ENCODE measurements at regions of chr15 and their contacts with region 1.

Region 1: DNA sequence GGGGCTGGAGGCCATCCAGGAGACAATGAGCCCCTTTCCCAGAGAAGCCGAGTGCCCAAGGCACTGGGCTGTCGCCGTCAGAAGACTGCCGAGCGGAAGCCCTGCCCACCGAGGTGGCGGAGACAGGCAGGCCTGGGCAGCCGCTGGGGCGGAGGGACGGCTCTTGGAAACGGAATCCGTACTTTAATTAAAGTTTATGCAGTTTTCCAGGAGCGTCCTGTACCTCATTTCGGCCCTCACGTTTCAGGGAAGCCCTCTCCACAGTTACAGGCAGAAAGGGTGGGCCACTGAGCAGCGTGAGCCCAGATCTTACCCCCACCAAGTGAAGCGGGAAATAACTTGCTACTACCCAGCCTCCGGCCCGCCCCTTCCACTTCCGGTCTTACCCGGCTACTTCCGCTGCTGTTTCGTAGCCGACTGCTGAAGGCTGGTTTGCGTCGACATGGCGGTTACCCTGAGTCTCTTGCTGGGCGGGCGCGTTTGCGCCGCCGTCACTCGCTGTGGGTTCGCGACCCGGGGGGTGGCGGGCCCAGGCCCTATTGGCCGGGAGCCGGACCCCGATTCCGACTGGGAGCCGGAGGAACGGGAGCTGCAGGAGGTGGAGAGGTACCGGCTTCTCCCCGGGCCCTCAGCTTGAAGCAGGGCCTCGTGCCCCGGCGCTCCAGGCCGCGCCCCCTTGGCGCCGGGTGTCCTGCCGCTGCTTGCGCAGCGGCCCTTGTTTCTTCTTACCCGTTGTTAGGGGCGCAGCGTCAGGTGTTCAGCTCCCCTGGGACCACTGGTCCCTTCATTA is at the start of gene NGRN:
- H3K4me3 Mint-ChIP-seq: peak within 1 kb of the TSS; percentile 94
- H3K27ac Mint-ChIP-seq: peak within 1 kb of the TSS; percentile 97
- H3K4me1 Mint-ChIP-seq: peaks cover 52% of the 10 kb centered on the region
- H3K27me3 Mint-ChIP-seq: no peaks in the 10 kb centered on the region

Region 2: GRCh38 chr15:90233376-90234095 is 31.9 kb before region 1 on chr15 and contains the start of gene CIB1:
- intact Hi-C with region 1: loop called (anchors 2 kb)
- H3K4me3 Mint-ChIP-seq: peak within 1 kb of the TSS; percentile 79
- H3K27ac Mint-ChIP-seq: peak within 1 kb of the TSS; percentile 83
- H3K4me1 Mint-ChIP-seq: peaks cover 53% of the 10 kb centered on the region
- H3K27me3 Mint-ChIP-seq: no peaks in the 10 kb centered on the region

Region 3: GRCh38 chr15:90249203-90249863 is 16.1 kb before region 1 on chr15 and contains the start of gene TTLL13:
- intact Hi-C with region 1: loop called (anchors 2 kb)
- H3K4me3 Mint-ChIP-seq: peak within 1 kb of the TSS; percentile 77
- H3K27ac Mint-ChIP-seq: peak within 1 kb of the TSS; percentile 47
- H3K4me1 Mint-ChIP-seq: peaks cover 20% of the 10 kb centered on the region
- H3K27me3 Mint-ChIP-seq: peaks cover 12% of the 10 kb centered on the region

Region 4: DNA sequence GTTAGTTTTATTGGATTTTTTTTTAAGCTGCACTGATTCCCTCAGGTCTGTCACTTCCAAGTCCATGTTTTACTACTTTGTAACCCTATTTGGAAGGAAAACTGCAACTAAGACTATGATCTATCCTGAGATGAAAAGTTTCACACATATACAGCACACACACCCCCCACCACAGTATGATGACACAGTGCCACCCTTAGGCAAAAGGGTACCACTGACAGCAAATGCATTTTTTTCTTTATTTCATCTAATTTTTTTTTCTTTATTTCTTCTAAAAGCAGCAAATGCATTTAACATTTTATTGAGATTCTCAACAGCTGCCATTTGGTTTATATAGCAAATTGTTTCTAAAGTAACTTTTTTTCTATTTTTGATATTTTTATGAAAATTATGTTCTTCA is 21.2 kb after region 1 on chr15:
- intact Hi-C with region 1: no loop called
- H3K4me3 Mint-ChIP-seq: no peak overlapping the region
- H3K27ac Mint-ChIP-seq: no peak overlapping the region
- H3K4me1 Mint-ChIP-seq: no peaks in the 10 kb centered on the region
- H3K27me3 Mint-ChIP-seq: no peaks in the 10 kb centered on the region

Measured in dendritic cell treated with granulocyte-macrophage colony-stimulating factor and Interleukin-4, amounts not matched to agents 40 ng/mL and 50 ng/mL, for 4 days (primary cell).